ENCODE measurements at regions of chr10 and their contacts with region 1.

Region 1: GRCh38 chr10:56537984-56538383 is 176.9 kb upstream of the ZWINT start:
- DNase-seq: peak; percentile 1
- ATAC-seq: no peak
- H3K4me3 ChIP-seq: no peak overlapping the region
- H3K27ac ChIP-seq: no peak overlapping the region
- H3K4me1 ChIP-seq: no peaks in the 10 kb centered on the region
- H3K27me3 ChIP-seq: no peaks in the 10 kb centered on the region
- CTCF ChIP-seq: no peak
- EP300 ChIP-seq: no peak
- POLR2A ChIP-seq: no peak
- RAD21 ChIP-seq: no peak

Region 2: DNA sequence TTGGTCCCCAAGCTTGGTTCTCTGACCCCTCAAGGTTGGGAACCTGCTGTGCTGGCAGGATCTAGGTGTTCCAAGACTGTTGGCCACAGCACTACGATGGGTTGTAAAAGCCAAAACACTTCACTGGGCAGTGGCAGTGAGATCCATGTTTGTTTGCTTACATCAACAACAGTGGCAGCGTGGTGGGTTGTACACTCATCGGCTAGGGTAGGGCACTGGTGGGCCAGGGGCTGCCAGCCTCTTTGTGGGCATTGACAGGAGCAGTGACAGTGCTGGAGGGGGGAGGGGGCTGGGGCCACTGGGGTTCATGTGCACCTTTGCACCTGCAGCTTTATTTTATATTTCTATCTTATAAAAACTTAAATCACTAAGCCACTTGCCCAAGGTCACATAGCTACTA is 50.2 kb before region 1 on chr10:
- CTCF ChIA-PET with region 1: no interaction called
- POLR2A ChIA-PET with region 1: no interaction called
- in situ Hi-C with region 1: loop called (anchors 5 kb)
- intact Hi-C with region 1: no loop called
- DNase-seq: no peak
- ATAC-seq: no peak
- H3K4me3 ChIP-seq: no peak overlapping the region
- H3K27ac ChIP-seq: no peak overlapping the region
- H3K4me1 ChIP-seq: no peaks in the 10 kb centered on the region
- H3K27me3 ChIP-seq: no peaks in the 10 kb centered on the region
- CTCF ChIP-seq: no peak
- EP300 ChIP-seq: no peak
- POLR2A ChIP-seq: no peak
- RAD21 ChIP-seq: no peak

Region 3: DNA sequence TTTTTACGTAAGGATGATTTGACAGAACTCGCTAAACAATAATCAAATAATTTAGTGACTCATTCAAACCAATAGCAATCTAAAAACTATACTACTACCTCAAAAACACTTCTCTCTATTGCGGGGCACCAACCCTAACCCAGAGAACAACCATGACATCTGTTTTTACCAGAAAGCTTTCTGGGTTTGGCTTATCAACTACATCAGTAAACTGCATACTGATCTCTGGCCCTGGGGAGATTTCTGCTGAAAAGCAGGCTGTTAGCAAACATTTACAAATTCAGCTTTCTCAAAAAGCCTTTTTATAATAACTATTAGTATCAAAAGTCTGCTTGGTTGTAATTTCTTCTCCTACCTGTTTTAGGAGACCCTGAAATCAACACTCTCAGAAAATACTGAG is 32.4 kb before region 1 on chr10:
- CTCF ChIA-PET with region 1: no interaction called
- POLR2A ChIA-PET with region 1: no interaction called
- in situ Hi-C with region 1: no loop called
- intact Hi-C with region 1: no loop called
- DNase-seq: no peak
- ATAC-seq: no peak
- H3K4me3 ChIP-seq: no peak overlapping the region
- H3K27ac ChIP-seq: no peak overlapping the region
- H3K4me1 ChIP-seq: no peaks in the 10 kb centered on the region
- H3K27me3 ChIP-seq: no peaks in the 10 kb centered on the region
- CTCF ChIP-seq: no peak
- EP300 ChIP-seq: no peak
- POLR2A ChIP-seq: no peak
- RAD21 ChIP-seq: no peak